ENCODE measurements at regions of chr3 and their contacts with region 1.

Region 1: DNA sequence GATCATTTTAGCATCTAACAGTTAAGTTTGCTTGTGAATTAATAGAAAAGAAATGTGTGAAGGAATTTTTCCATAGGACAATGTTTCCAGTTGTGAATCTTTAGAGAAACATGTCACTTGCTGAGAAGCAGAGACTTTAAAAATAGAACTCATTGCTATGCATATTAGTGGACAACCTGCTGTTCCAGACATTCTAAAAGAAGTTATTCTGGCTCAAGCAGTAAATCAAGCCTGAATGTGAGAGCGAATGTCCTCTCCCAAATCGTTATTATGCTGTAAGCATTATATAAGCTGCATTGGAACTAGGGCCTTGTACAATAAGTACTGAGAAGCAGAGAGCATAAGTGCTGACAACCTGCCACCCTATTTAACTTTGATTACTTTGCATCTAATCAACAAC is 990.9 kb downstream of the PLOD2 start:
- DNase-seq: no peak
- H3K4me3 ChIP-seq: no peak overlapping the region
- H3K27ac ChIP-seq: no peak overlapping the region
- H3K4me1 ChIP-seq: no peaks in the 10 kb centered on the region
- H3K27me3 ChIP-seq: no peaks in the 10 kb centered on the region
- CTCF ChIP-seq: no peak
- POLR2A ChIP-seq: no peak

Region 2: GRCh38 chr3:145272684-145273083 is 102.6 kb after region 1 on chr3:
- intact Hi-C with region 1: loop called (anchors 5 kb)
- DNase-seq: no peak
- H3K4me3 ChIP-seq: no peak overlapping the region
- H3K27ac ChIP-seq: no peak overlapping the region
- H3K4me1 ChIP-seq: no peaks in the 10 kb centered on the region
- H3K27me3 ChIP-seq: no peaks in the 10 kb centered on the region
- CTCF ChIP-seq: no peak
- POLR2A ChIP-seq: no peak

Region 3: GRCh38 chr3:146072824-146073223 is 902.7 kb after region 1 on chr3:
- intact Hi-C with region 1: no loop called
- DNase-seq: no peak
- H3K4me3 ChIP-seq: no peak overlapping the region
- H3K27ac ChIP-seq: no peak overlapping the region
- H3K4me1 ChIP-seq: no peaks in the 10 kb centered on the region
- H3K27me3 ChIP-seq: no peaks in the 10 kb centered on the region
- CTCF ChIP-seq: no peak
- POLR2A ChIP-seq: no peak

Region 4: DNA sequence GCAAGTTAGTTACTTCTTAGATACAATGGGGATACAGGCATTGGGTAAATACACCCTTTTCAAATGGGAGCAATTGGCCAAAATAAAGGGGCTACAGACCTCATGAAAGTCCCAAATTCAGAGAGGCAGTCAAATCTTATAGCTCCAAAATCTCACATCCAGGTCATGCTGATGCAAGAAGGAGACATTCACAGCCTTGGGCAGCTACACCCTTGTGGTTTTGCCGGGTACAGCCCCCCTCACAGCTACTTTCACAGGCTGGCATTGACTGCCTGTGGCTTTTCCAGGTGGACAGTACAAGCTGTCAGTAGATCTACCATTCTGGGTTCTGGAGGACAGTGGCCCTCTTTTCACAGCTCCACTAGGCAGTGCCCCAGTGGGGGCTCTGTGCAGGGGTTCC is 1391.8 kb after region 1 on chr3:
- intact Hi-C with region 1: no loop called
- DNase-seq: no peak
- H3K4me3 ChIP-seq: no peak overlapping the region
- H3K27ac ChIP-seq: no peak overlapping the region
- H3K4me1 ChIP-seq: no peaks in the 10 kb centered on the region
- H3K27me3 ChIP-seq: no peaks in the 10 kb centered on the region
- CTCF ChIP-seq: no peak
- POLR2A ChIP-seq: no peak

Measured in breast epithelium (tissue), 4 donors.